ENCODE measurements at regions of chr10 and their contacts with region 1.

Region 1: GRCh38 chr10:50152792-50153272 is 85.1 kb downstream of the WASHC2A start:
- DNase-seq: peak in 3 of 4 experiments; percentile 13 to 53 (median 19)
- ATAC-seq: peak; percentile 92
- H3K4me3 ChIP-seq: no peak overlapping the region
- H3K27ac ChIP-seq: no peak overlapping the region
- H3K4me1 ChIP-seq: peaks cover 0 to 6% of the 10 kb centered on the region in 2 experiments; a peak in 2 of 5 replicates
- H3K27me3 ChIP-seq: peaks cover 3 to 16% of the 10 kb centered on the region in 2 experiments; a peak in 4 of 5 replicates
- CTCF ChIP-seq: no peak
- EP300 ChIP-seq: no peak
- POLR2A ChIP-seq: no peak
- RAD21 ChIP-seq: peak in 1 of 2 experiments; percentile 41; a peak in 1 of 4 replicates

Region 2: DNA sequence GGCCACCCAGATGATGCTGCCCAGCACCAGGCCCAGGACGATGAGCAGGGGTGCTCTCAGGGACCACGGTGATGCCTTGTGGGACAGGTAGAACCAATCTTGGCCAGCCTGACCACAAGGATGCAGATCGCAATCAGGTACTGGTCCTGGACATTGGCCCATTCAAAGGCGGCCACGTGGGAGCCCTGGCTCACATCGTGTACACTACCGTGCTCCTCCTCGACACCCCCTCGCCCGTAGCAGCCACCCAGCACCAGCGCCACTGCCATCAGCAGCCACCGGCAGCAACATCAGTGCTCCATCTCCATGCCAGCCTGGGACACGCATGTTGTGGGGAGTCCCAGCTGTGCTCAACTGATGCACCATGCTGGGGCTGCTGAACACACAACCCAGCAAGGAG is 125.6 kb before region 1 on chr10:
- CTCF ChIA-PET with region 1: no interaction called
- POLR2A ChIA-PET with region 1: interaction called, 3 read pairs
- in situ Hi-C with region 1: loop called (anchors 5 kb)
- intact Hi-C with region 1: loop called (anchors 5 kb)
- DNase-seq: no peak
- ATAC-seq: no peak
- H3K4me3 ChIP-seq: no peak overlapping the region
- H3K27ac ChIP-seq: no peak overlapping the region
- H3K4me1 ChIP-seq: peaks cover 0 to 5% of the 10 kb centered on the region in 2 experiments; a peak in 2 of 5 replicates
- H3K27me3 ChIP-seq: peaks cover 28 to 33% of the 10 kb centered on the region in 2 experiments; a peak in 4 of 5 replicates
- CTCF ChIP-seq: no peak
- EP300 ChIP-seq: no peak
- POLR2A ChIP-seq: no peak
- RAD21 ChIP-seq: no peak

Region 3: GRCh38 chr10:50216894-50217293 is 64.1 kb after region 1 on chr10:
- CTCF ChIA-PET with region 1: no interaction called
- POLR2A ChIA-PET with region 1: no interaction called
- in situ Hi-C with region 1: loop called (anchors 10 kb)
- intact Hi-C with region 1: no loop called
- DNase-seq: no peak
- ATAC-seq: peak; percentile 31; the same call in 1 of the 3 replicates
- H3K4me3 ChIP-seq: no peak overlapping the region
- H3K27ac ChIP-seq: no peak overlapping the region
- H3K4me1 ChIP-seq: no peaks in the 10 kb centered on the region
- H3K27me3 ChIP-seq: no peaks in the 10 kb centered on the region
- CTCF ChIP-seq: no peak
- EP300 ChIP-seq: no peak
- POLR2A ChIP-seq: no peak
- RAD21 ChIP-seq: no peak

Region 4: GRCh38 chr10:50417886-50418830 is 265.3 kb after region 1 on chr10:
- CTCF ChIA-PET with region 1: no interaction called
- POLR2A ChIA-PET with region 1: no interaction called
- in situ Hi-C with region 1: no loop called
- intact Hi-C with region 1: no loop called
- DNase-seq: peak; percentile 77 to 94 (median 84)
- ATAC-seq: peak; percentile 81
- H3K4me3 ChIP-seq: peak overlapping the region; percentile 71
- H3K27ac ChIP-seq: peak overlapping the region; percentile 75
- H3K4me1 ChIP-seq: peaks cover 8 to 42% of the 10 kb centered on the region in 2 experiments
- H3K27me3 ChIP-seq: no peaks in the 10 kb centered on the region
- CTCF ChIP-seq: no peak
- EP300 ChIP-seq: peak; percentile 50; the same call in 1 of the 2 replicates
- POLR2A ChIP-seq: peak; percentile 76
- RAD21 ChIP-seq: no peak

Measured in K562 (cell line).